Ascending aorta (tissue), 2 donors: ENCODE measurements at regions of chr11 and their contacts with region 1.

Region 1: DNA sequence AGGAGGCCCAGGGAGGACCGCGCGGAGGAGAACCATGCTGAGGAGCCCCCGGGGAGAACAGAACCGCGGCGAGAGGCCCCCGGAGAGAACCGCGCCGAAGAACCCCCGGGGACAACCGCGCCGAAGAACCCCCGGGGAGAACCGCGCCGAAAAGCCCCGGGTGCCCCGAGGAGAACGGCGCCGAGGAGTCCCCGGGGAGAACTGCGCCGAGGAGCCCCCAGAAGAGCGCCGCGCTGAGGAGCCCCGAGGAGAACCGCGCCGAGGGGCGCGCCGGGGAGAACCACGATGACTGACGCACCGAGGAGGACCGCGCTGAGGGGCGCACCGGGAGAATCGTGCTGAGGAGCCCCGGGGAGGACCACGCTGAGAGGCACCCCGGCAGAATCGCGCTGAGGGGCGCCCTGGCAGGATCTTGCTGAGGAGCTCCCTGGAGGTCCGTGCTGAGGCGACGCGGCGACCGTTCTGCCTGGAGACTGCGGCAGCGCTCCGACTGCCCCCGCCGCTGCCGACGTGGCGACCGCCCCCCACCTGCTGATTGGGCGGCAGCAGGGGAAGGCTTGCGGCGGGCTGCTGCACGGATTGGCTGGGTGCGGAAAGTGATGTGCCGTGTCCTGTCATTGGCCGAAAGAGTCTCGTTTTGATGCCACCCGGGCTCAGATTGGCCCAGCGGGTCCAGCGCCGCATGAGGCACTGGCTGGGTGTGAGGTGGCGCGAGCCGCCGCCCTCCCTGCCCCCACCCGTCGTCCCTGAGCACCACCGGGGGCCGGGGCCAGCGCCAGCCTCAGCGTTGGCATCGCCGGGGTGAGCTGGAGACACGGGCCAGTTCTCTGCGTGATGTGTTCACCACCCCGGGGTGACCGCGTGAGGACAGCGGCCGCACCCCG is at the start of gene KCNQ1OT1:
- DNase-seq: peak; percentile 73 to 94
- H3K4me3 ChIP-seq: peak within 1 kb of the TSS; percentile 64 to 80
- H3K27ac ChIP-seq: peak within 1 kb of the TSS; percentile 89 to 96
- H3K4me1 ChIP-seq: peaks cover 0 to 4% of the 10 kb centered on the region in 2 donors
- H3K27me3 ChIP-seq: no peaks in the 10 kb centered on the region
- CTCF ChIP-seq: no peak
- total RNA-seq, gene KCNQ1OT1: 1.5 TPM

Region 2: GRCh38 chr11:2761131-2762030 is 61.6 kb after region 1 on chr11:
- intact Hi-C with region 1: no loop called
- DNase-seq: peak; percentile 2 to 54
- H3K4me3 ChIP-seq: no peak overlapping the region
- H3K27ac ChIP-seq: no peak overlapping the region
- H3K4me1 ChIP-seq: no peaks in the 10 kb centered on the region
- H3K27me3 ChIP-seq: no peaks in the 10 kb centered on the region
- CTCF ChIP-seq: no peak

Region 3: GRCh38 chr11:2778630-2779498 is 79.1 kb after region 1 on chr11:
- intact Hi-C with region 1: loop called (anchors 2 kb)
- DNase-seq: peak; percentile 47 to 89
- H3K4me3 ChIP-seq: peak overlapping the region; percentile 18 to 53
- H3K27ac ChIP-seq: peak overlapping the region; percentile 68 to 81
- H3K4me1 ChIP-seq: peaks cover 11 to 36% of the 10 kb centered on the region in 2 donors
- H3K27me3 ChIP-seq: no peaks in the 10 kb centered on the region
- CTCF ChIP-seq: peak in 2 of 3 experiments; percentile 13 to 52